ENCODE measurements at regions of chr1 and their contacts with region 1.

Region 1: GRCh38 chr1:54199765-54200518 is at the starts of genes CYB5RL and MRPL37:
- DNase-seq: peak; percentile 89
- H3K4me3 Mint-ChIP-seq: peak within 1 kb of the TSS; percentile 90
- H3K27ac Mint-ChIP-seq: peak within 1 kb of the TSS; percentile 60
- H3K4me1 Mint-ChIP-seq: peaks cover 40% of the 10 kb centered on the region
- H3K27me3 Mint-ChIP-seq: no peaks in the 10 kb centered on the region
- total RNA-seq, gene CYB5RL: 8.3 and 11.3 TPM in 2 replicates
- total RNA-seq, gene MRPL37: 145 and 150 TPM in 2 replicates

Region 2: GRCh38 chr1:54287176-54287650 is 87.3 kb after region 1 on chr1:
- intact Hi-C with region 1: loop called (anchors 2 kb)
- DNase-seq: peak; percentile 79
- H3K4me3 Mint-ChIP-seq: peak overlapping the region; percentile 81
- H3K27ac Mint-ChIP-seq: peak overlapping the region; percentile 98
- H3K4me1 Mint-ChIP-seq: peaks cover 89% of the 10 kb centered on the region
- H3K27me3 Mint-ChIP-seq: no peaks in the 10 kb centered on the region

Region 3: DNA sequence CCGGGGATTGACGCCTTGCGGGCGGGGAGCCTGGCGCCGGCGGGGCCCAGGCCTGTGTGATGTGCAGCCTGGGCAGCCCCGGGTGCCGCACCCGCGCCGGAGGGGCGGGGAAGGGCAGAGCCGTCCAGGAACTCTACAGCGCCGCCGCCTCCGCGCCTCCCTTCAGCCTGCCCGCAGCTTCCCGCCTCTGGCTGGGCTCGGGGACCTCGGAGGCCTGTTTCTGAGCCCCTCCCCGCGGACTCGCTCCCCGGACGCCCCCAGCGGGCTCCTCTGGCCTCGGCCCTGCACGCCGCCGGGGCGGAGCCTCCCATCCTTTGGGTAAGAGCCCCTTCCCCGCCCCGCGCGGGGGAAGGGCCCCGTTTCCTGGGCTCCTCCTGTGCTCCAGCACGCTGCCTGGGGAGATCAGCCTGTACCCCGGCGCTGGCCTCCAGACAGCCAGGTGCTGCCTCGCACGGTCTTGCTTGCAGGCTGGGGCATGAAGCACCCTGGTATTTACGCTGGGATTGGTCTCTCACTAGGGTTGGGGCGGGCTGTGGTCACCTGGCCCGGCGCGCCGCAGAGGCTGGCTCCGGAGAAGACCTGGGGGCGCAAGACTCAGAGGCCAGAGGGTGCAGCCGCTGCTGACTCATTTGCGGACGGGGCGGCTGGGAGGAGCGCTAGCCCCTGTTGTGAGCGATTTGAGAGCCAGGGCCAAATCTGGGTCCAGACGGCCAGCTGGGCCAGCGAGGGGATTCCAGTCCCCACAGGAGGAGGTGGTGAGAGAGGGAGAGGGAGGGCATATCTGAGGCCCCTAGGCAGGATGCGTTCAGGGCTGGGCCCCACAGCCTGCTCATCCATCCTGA is 342.4 kb after region 1 on chr1:
- intact Hi-C with region 1: loop called (anchors 1 kb)
- DNase-seq: peak; percentile 55
- H3K4me3 Mint-ChIP-seq: peak overlapping the region; percentile 75
- H3K27ac Mint-ChIP-seq: peak overlapping the region; percentile 49
- H3K4me1 Mint-ChIP-seq: no peaks in the 10 kb centered on the region
- H3K27me3 Mint-ChIP-seq: peaks cover 9% of the 10 kb centered on the region

Region 4: GRCh38 chr1:54800899-54801759 is 601.2 kb after region 1 on chr1 and contains the start of gene TTC22:
- intact Hi-C with region 1: loop called (anchors 10 kb)
- DNase-seq: peak; percentile 56
- H3K4me3 Mint-ChIP-seq: peak within 1 kb of the TSS; percentile 85
- H3K27ac Mint-ChIP-seq: peak within 1 kb of the TSS; percentile 80
- H3K4me1 Mint-ChIP-seq: peaks cover 65% of the 10 kb centered on the region
- H3K27me3 Mint-ChIP-seq: no peaks in the 10 kb centered on the region
- total RNA-seq, gene TTC22: 2.2 and 2.3 TPM in 2 replicates

Measured in activated T-helper 1 cell treated with anti-CD3 and anti-CD28 coated beads, Interleukin-12 subunit alpha, Interleukin-12 subunit beta, Interleukin-2, Interleukin-4 antibody, amounts not matched to agents 30 ng/mL and 10 ng/mL and 1 ng/mL, durations not matched to agents 14 hours and 24 hours and 36 hours (primary cell).